ENCODE measurements at regions of chr2 and their contacts with region 1.

Region 1: DNA sequence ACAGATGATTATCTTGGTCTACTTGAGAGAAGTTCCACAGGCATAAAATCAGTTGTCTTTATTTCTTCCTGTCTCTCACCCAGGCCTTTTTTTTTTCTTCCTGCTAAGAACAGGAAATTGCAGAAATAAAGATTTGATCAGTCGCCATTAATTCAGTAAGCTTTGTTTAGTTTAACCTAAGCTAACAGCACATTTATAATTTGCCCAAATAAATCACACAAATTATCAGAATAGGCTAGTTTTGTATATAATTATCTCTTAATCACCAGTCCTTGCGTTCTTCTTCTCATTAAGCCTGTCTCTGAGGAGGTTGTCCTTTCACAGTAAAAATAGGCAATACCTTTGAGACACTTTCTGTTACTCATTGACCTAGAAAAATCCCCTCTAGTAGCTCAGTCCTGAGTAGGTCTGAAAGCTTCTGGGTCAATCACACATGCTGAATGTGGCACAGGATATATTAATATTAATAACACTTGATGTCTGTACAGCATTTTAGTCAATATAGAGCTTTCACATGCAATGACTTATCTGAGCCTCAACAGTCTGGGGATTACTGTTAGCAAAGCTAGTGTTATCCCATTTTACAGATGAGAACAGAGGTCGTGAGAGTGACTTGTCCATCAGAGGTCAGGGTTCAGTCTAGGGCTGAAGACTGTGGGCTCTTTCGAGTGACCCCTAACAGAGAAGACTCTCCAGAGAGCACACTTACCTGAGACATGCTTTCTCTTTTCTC is 11.2 kb upstream of the STK17B start:
- DNase-seq: no peak
- H3K4me3 Mint-ChIP-seq: peak overlapping the region; percentile 75
- H3K27ac Mint-ChIP-seq: peak overlapping the region; percentile 98
- H3K4me1 Mint-ChIP-seq: peaks cover 83% of the 10 kb centered on the region
- H3K27me3 Mint-ChIP-seq: no peaks in the 10 kb centered on the region

Region 2: GRCh38 chr2:195820373-195820772 is 362.2 kb before region 1 on chr2:
- CTCF ChIA-PET with region 1: no interaction called
- POLR2A ChIA-PET with region 1: no interaction called
- DNase-seq: no peak
- H3K4me3 Mint-ChIP-seq: no peak overlapping the region
- H3K27ac Mint-ChIP-seq: no peak overlapping the region
- H3K4me1 Mint-ChIP-seq: no peaks in the 10 kb centered on the region
- H3K27me3 Mint-ChIP-seq: no peaks in the 10 kb centered on the region

Region 3: DNA sequence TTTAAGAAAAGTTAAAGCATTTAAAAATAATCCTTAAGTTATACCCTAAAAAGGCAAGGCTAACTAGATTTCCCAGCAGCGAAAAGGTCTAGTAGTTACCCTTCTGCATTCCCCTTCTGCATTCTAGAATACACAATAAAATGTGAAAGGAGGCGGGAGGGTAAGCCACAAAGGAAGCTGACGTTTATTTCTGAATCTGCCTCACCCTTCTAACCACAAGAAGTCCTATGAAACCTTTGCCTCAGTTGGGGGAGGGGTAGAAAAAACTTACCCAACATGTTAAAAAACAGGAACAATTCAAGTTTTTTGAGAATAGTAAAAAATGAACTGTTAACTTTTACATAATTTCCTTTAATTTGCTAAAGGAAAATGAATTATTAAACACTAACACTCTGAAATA is 22.5 kb before region 1 on chr2:
- CTCF ChIA-PET with region 1: interaction called, 24 read pairs
- POLR2A ChIA-PET with region 1: interaction called, 383 read pairs
- DNase-seq: peak; percentile 74
- H3K4me3 Mint-ChIP-seq: peak overlapping the region; percentile 74
- H3K27ac Mint-ChIP-seq: peak overlapping the region; percentile 80
- H3K4me1 Mint-ChIP-seq: peaks cover 71% of the 10 kb centered on the region
- H3K27me3 Mint-ChIP-seq: no peaks in the 10 kb centered on the region

Region 4: DNA sequence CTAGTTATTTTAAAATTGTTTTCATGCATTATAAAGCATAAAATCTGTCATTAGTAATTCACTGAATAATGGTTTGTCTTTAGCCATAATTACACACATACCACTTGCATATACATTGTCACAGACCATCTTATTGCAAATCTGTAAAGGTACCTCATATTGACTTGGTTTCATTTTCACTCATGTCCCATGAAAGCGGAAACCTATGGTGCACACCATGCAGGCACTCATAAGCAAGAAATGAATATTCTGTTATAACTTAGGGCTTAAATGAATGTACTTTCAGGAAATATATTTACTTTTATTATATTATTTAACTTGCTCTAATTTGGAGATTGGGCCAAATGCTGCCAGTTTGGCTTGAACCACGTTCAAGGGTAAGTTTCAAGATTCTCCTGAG is 18.0 kb after region 1 on chr2:
- CTCF ChIA-PET with region 1: interaction called, 5 read pairs
- POLR2A ChIA-PET with region 1: interaction called, 88 read pairs
- DNase-seq: peak; percentile 56
- H3K4me3 Mint-ChIP-seq: peak overlapping the region; percentile 64
- H3K27ac Mint-ChIP-seq: peak overlapping the region; percentile 89
- H3K4me1 Mint-ChIP-seq: peaks cover 56% of the 10 kb centered on the region
- H3K27me3 Mint-ChIP-seq: no peaks in the 10 kb centered on the region

Region 5: DNA sequence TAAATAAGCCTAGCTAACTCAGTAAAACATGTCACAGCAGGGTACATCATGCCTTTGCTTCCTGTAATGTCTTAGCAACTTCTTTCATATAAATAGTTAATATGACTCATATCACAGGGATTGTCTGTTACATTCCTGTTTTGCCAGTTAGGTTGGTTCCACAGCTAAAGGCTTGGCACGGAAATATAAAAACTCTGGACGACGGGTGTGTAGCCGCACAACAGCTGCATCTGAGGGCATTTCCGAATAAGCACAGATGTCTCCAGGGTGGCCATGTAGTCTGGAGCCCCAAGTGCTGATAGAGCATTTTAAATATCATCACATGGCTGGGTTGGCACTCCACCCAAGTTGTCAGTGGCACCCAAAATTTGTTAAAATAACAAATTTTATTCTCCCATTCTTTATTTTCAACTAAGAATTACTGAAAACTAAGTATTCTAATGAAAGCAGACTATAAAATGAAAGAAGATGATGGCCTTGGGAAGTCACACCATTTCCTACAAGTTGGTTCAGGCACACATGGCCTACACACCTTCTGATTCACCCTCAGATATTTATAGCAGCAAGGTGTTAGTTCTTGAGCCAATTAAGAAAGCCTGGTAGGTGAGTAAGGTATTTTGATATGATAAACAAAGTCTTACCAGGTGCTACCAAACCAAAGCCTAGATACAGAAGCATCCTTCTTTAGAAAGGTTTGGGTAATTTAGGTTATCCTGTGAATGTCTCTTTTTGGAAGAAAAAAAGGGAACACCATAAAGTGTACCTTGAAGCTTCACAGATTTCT is 50.6 kb after region 1 on chr2:
- CTCF ChIA-PET with region 1: interaction called, 8 read pairs
- POLR2A ChIA-PET with region 1: interaction called, 188 read pairs
- DNase-seq: no peak
- H3K4me3 Mint-ChIP-seq: no peak overlapping the region
- H3K27ac Mint-ChIP-seq: peak overlapping the region; percentile 85
- H3K4me1 Mint-ChIP-seq: peaks cover 91% of the 10 kb centered on the region
- H3K27me3 Mint-ChIP-seq: no peaks in the 10 kb centered on the region

Region 6: GRCh38 chr2:196277002-196277401 is 94.4 kb after region 1 on chr2:
- CTCF ChIA-PET with region 1: interaction called, 31 read pairs
- POLR2A ChIA-PET with region 1: interaction called, 44 read pairs
- DNase-seq: peak; percentile 42
- H3K4me3 Mint-ChIP-seq: peak overlapping the region; percentile 27
- H3K27ac Mint-ChIP-seq: no peak overlapping the region
- H3K4me1 Mint-ChIP-seq: peaks cover 55% of the 10 kb centered on the region
- H3K27me3 Mint-ChIP-seq: no peaks in the 10 kb centered on the region

Measured in activated CD4-positive, alpha-beta memory T cell treated with anti-CD3 and anti-CD28 coated beads, Interleukin-2, amount 10 ng/mL, durations not matched to agents 7 days and 5 days (primary cell).